ENCODE measurements at regions of chr18 and their contacts with region 1.

Region 1: DNA sequence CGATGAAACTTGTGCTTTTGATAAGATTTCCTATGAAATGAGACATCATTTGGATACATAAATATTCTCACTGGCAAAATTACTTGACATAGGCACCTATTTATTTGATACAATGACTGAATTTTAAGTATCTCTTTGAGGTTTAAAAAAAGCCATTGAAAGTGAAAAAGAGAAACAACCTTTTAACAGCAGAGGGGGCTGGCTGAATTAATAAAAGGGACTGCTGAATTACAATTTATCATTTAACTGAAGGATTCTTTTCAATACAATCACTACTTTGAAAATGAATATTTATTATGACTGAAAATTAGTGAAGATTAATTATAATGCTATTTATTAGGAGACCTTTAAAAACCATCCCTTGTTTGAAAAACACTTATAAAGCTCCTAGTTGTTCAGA is 335.3 kb downstream of the DLGAP1 start:
- DNase-seq: no peak
- H3K4me3 ChIP-seq: peak overlapping the region in 1 of 4 experiments; percentile 44; a peak in 1 of 8 replicates
- H3K27ac ChIP-seq: peak overlapping the region; percentile 50; the same call in 1 of the 2 replicates
- H3K4me1 ChIP-seq: peaks cover 8 to 29% (median 23%) of the 10 kb centered on the region in 4 experiments
- H3K27me3 ChIP-seq: no peaks in the 10 kb centered on the region
- CTCF ChIP-seq: no peak
- EP300 ChIP-seq: no peak
- POLR2A ChIP-seq: no peak
- RAD21 ChIP-seq: peak in 1 of 2 experiments; percentile 18; a peak in 1 of 4 replicates

Region 2: DNA sequence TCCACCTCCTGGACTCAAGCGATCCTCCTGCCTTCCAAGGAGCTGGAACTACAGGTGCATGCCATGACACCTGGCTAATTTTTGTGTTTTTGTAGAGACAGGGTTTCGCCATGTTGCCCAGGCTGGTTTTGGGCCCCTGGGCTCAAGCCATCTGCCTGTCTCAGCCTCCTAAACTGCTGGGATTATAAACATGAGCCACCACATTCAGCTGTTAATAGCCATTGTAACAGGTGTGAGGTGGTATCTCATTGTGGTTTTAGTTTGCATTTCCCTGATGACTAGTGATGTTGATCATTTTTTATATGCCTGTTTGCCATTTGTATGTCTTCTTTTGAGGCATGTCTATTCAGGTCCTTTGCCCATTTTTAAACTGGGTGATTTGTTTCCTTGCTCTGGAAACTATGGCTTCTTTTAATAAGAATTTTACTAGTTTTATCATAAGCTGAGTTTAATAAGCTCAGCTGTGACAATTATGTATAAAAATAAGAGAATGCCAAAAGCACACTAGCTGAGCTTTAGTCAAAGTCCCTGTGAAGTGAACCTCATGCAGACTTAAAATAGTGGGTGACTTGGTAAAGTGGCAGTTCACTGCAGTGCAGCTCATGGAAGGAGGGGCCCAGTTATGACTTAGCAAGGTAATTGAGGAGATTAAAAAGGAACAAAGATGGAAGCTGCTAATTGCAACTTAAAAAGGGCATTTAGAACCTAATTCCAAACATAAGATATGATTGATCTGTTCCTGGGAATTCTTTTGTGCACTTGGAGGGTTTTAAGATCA is 204.8 kb before region 1 on chr18:
- CTCF ChIA-PET with region 1: no interaction called
- POLR2A ChIA-PET with region 1: no interaction called
- DNase-seq: no peak
- H3K4me3 ChIP-seq: no peak overlapping the region
- H3K27ac ChIP-seq: no peak overlapping the region
- H3K4me1 ChIP-seq: no peaks in the 10 kb centered on the region; a peak in 1 of 7 replicates
- H3K27me3 ChIP-seq: no peaks in the 10 kb centered on the region
- CTCF ChIP-seq: no peak
- EP300 ChIP-seq: no peak
- POLR2A ChIP-seq: no peak
- RAD21 ChIP-seq: no peak

Region 3: DNA sequence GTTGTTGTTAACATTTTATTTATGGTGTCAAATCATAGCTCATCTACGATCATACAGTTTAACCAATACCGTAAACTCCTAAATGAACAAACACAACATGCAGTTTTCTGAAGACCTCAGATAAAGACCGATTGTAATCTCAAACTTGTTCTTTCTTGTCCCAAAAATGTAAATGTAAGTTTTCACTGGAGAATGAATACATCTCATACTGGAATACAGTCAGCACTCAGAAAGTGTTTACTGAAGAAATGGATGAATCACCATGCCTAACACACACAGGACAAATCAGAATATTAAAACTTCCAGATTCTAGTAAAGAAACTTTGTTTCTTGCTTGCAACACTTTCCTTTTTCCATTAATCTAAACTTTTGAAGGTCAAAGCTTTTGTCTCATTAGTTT is 45.2 kb before region 1 on chr18:
- CTCF ChIA-PET with region 1: no interaction called
- POLR2A ChIA-PET with region 1: no interaction called
- DNase-seq: no peak
- H3K4me3 ChIP-seq: no peak overlapping the region
- H3K27ac ChIP-seq: no peak overlapping the region
- H3K4me1 ChIP-seq: peaks cover 0 to 8% (median 0%) of the 10 kb centered on the region in 4 experiments; a peak in 2 of 7 replicates
- H3K27me3 ChIP-seq: no peaks in the 10 kb centered on the region
- CTCF ChIP-seq: no peak
- EP300 ChIP-seq: no peak
- POLR2A ChIP-seq: no peak
- RAD21 ChIP-seq: no peak

Region 4: GRCh38 chr18:4130734-4131719 is 11.2 kb after region 1 on chr18:
- CTCF ChIA-PET with region 1: interaction called, 4 read pairs
- POLR2A ChIA-PET with region 1: interaction called, 11 read pairs
- DNase-seq: no peak
- H3K4me3 ChIP-seq: no peak overlapping the region
- H3K27ac ChIP-seq: no peak overlapping the region
- H3K4me1 ChIP-seq: peaks cover 0 to 13% (median 10%) of the 10 kb centered on the region in 4 experiments; a peak in 6 of 7 replicates
- H3K27me3 ChIP-seq: no peaks in the 10 kb centered on the region
- CTCF ChIP-seq: peak in 1 of 3 experiments; percentile 25; a peak in 1 of 4 replicates
- EP300 ChIP-seq: no peak
- POLR2A ChIP-seq: no peak
- RAD21 ChIP-seq: no peak

Region 5: DNA sequence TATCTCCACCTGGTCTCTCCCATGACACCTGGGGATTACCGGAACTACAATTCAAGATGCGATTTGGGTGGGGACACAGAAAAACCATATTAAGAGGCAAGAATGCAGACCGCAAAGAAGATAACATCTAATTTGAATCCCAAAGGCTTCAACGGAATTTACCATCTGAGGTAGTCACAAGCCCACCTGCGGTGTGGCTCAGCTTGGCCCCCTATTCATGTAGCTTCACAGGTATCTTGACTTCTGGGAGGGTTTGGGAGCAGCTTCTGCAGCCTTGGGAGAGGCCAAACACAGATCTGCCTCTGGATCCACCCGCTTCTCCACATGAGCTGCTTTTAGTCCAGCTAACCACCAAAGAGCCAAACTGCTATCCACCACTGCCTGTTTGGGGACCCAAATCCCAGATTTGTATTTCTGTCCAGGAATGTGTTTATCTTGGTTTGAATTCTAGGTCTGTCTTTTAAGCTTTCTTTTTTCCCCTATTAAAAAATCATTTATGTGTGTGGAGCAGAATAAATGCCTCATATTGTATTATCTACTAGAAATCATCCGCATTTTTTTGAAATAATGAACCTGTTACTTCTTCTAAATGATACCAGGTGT is 87.7 kb after region 1 on chr18:
- CTCF ChIA-PET with region 1: no interaction called
- POLR2A ChIA-PET with region 1: no interaction called
- DNase-seq: peak in 1 of 2 experiments; percentile 17
- H3K4me3 ChIP-seq: no peak overlapping the region
- H3K27ac ChIP-seq: no peak overlapping the region
- H3K4me1 ChIP-seq: peaks cover 0 to 6% (median 3%) of the 10 kb centered on the region in 4 experiments; a peak in 4 of 7 replicates
- H3K27me3 ChIP-seq: no peaks in the 10 kb centered on the region
- CTCF ChIP-seq: no peak
- EP300 ChIP-seq: no peak
- POLR2A ChIP-seq: no peak
- RAD21 ChIP-seq: no peak

Region 6: DNA sequence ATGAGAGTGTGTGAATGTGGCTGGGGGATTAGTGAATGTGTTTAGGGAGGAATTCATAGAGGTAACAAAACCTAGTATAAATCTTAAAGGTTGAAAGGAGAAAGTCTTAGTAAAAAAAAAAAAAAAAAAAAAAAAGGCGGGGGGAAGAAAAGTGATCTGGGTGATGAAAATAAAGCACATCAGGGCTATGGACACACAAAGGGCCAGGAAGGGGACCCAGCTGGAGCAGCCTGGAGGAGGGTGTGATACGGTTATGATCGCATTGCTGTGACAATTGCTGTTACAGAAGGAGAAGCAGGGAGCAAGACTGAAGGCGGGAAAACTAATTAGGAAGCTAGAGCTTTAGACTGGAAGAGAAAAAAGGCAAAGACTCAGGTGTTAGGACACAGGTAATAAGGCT is 249.9 kb after region 1 on chr18:
- CTCF ChIA-PET with region 1: no interaction called
- POLR2A ChIA-PET with region 1: no interaction called
- DNase-seq: no peak
- H3K4me3 ChIP-seq: no peak overlapping the region
- H3K27ac ChIP-seq: no peak overlapping the region
- H3K4me1 ChIP-seq: no peaks in the 10 kb centered on the region; a peak in 1 of 7 replicates
- H3K27me3 ChIP-seq: no peaks in the 10 kb centered on the region
- CTCF ChIP-seq: no peak
- EP300 ChIP-seq: no peak
- POLR2A ChIP-seq: no peak
- RAD21 ChIP-seq: no peak